Activated CD8-positive, alpha-beta T cell treated with anti-CD3 and anti-CD28 coated beads, Interleukin-2, amount 10 ng/mL, durations not matched to agents 7 days and 5 days (primary cell): ENCODE measurements at regions of chr5 and their contacts with region 1.

Region 1: DNA sequence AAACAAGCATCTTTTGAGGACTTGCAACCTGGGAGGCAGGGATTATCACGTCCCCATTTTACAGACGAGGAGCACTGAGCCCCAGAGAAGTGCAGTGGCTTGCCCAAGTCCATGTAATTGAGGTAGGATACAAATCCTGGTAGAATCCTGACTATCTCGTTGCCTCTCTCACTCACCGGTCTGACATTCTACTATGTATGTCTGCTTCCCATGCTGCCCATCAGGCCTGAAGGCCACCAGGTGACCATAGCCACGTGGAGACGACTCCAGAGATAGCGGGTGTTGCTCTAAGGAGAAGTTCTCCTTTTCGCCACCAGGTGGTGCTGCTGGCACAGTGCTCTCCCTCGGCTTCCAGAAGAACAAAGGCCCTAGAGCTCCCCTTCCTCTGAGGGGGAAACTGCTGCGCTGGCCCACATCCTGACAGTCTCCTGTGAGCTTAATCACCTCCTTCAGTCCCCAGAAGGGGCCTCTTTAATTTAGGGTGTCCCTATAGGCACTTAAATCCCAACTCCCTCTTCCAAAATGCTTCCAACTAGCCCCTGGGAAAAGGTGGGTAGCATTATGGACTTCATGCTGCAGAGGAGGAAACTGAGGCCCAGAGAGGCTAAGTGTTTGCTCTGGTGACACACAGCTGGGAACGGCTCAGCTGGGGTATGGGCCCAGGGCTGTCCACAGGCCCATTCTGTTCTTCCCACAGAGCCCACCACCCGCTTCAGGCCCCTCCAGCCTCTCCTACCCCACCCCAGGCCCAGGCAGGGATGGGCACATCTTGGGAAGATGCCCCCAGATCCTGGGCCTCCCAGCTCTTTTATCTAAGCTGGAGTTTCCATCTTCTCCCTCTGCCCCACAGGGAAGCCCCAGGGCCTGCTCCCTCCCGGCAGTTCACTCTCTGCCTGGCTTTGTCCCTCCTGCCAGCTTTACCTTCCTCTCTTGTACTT is 6.4 kb downstream of the SLC34A1 start:
- DNase-seq: peak; percentile 94
- ATAC-seq: peak; percentile 84
- H3K4me3 Mint-ChIP-seq: peak overlapping the region; percentile 19
- H3K27ac Mint-ChIP-seq: peak overlapping the region; percentile 93
- H3K4me1 Mint-ChIP-seq: peaks cover 59% of the 10 kb centered on the region
- H3K27me3 Mint-ChIP-seq: peaks cover 3% of the 10 kb centered on the region

Region 2: DNA sequence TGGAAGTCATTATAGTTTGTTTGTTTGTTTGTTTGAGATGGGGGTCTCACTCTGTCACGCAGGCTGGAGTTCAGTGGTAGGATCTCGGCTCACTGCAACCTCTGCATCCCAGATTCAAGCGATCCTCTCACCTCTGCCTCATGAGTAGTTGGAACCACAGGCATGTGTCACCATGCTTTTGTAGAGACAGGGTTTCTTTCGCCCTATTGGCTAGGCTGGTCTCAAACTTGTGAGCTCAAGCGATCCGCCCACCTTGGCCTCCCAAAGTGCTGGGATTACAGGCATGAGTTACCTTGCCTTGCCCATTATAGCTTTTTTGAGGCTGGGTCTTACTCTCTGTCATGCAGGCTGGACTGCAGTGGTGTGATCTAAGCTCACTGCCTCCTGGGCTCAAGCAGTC is 228.3 kb before region 1 on chr5:
- CTCF ChIA-PET with region 1: no interaction called
- POLR2A ChIA-PET with region 1: no interaction called
- DNase-seq: no peak
- ATAC-seq: no peak
- H3K4me3 Mint-ChIP-seq: no peak overlapping the region
- H3K27ac Mint-ChIP-seq: no peak overlapping the region
- H3K4me1 Mint-ChIP-seq: no peaks in the 10 kb centered on the region
- H3K27me3 Mint-ChIP-seq: no peaks in the 10 kb centered on the region

Region 3: DNA sequence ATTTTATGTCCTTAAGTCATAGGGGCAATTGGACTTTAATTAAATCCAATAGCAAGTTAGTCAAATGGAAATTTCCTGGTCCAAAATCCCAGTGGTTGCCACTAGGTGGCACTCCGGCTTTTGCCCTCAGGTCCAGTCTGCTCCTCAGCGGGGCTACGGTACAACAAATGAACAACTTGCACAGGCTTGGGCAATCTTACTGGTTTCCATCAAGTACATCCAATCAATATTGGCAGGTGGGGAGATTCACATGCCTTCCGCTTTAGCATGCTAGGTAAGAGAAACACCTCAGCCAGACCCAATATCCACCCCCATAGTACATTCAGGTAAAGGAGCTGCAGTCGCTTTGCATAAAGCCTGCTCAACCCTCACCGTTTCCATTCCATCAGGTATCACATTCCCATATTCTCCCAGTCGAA is 72.7 kb before region 1 on chr5:
- CTCF ChIA-PET with region 1: interaction called, 41 read pairs
- POLR2A ChIA-PET with region 1: interaction called, 3 read pairs
- DNase-seq: peak; percentile 84
- ATAC-seq: peak; percentile 67
- H3K4me3 Mint-ChIP-seq: no peak overlapping the region
- H3K27ac Mint-ChIP-seq: no peak overlapping the region
- H3K4me1 Mint-ChIP-seq: peaks cover 44% of the 10 kb centered on the region
- H3K27me3 Mint-ChIP-seq: no peaks in the 10 kb centered on the region

Region 4: DNA sequence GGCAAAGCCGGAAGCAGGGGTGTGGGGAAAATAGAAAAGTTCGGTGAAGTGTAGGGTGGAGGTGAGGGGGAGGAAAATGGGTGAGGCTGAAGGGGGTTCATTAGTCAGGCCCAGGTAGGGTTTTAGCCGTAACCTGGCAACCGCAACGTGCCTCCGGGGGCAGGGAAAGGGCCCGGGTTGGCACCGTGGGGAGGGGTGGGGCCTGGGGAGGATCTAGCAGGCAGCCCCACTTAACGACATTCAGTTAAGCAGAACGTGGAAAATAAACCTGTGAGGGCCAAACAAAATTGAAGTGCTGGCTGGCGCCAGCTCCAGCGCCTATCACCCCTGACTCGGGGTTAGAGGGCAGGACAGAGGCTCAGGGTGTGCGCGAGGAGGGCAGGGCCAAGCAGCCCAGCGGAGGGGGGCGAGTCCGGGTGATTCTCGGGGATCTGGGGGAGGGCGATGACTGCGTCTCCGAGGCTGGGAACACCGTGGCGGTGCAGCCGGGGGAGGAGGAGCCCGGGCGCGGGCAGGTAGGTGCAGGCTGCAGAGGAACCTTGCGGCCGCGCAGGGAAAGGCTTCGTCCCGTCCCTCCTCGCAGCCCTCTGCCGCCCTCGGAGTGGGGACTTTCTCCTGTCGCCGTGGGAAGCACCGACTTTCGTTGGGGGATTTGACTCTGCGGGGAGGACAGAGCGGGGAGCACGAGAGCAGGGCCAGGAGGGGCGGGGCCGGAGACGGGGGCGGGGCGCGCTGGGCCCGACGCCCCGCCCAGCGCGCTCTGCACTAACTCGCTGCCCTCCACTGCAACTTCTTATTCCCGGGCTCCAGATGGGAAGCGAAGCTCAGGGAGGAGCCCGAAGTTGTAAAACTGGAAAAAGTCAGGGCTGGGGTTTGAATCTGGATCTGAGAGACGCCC is 27.8 kb before region 1 on chr5:
- CTCF ChIA-PET with region 1: interaction called, 27 read pairs
- POLR2A ChIA-PET with region 1: interaction called, 3 read pairs
- DNase-seq: peak; percentile 66
- ATAC-seq: peak; percentile 62
- H3K4me3 Mint-ChIP-seq: peak overlapping the region; percentile 79
- H3K27ac Mint-ChIP-seq: peak overlapping the region; percentile 41
- H3K4me1 Mint-ChIP-seq: peaks cover 70% of the 10 kb centered on the region
- H3K27me3 Mint-ChIP-seq: no peaks in the 10 kb centered on the region

Region 5: DNA sequence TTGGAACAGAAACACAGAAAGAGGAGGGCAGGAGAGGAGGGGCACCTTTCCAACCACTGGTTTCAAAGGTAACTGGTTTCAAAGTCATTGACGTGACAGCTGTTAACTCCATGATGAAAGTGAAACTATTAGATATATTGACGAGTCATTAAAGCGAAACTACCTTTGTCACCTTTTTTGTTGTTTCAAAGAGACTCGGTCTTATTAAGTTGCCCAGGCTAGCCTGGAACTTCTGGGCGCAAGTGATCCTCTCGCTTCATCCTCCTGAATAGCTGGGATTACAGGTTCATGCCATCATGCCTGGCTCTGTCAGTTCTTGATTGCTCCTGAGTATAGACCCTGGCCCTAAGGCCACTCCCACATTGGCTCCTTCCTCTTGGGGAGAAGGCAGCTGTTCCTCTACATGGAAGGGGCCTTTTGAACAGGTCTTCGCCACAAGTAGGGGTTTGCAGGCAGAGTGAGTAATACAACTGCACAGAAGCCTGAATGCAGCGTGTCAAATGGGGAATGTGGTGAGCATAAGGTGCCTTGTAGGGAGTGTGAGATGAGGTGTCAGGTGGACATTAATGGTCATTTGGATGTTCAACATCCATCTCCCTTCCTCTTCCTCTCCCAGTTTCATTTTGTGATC is 22.1 kb after region 1 on chr5:
- CTCF ChIA-PET with region 1: interaction called, 270 read pairs
- POLR2A ChIA-PET with region 1: no interaction called
- DNase-seq: no peak
- ATAC-seq: peak; percentile 38
- H3K4me3 Mint-ChIP-seq: peak overlapping the region; percentile 10
- H3K27ac Mint-ChIP-seq: peak overlapping the region; percentile 65
- H3K4me1 Mint-ChIP-seq: peaks cover 46% of the 10 kb centered on the region
- H3K27me3 Mint-ChIP-seq: no peaks in the 10 kb centered on the region

Region 6: GRCh38 chr5:177446200-177447065 is 55.8 kb after region 1 on chr5 and contains the start of gene PRR7:
- CTCF ChIA-PET with region 1: interaction called, 175 read pairs
- POLR2A ChIA-PET with region 1: interaction called, 7 read pairs
- DNase-seq: peak; percentile 79
- ATAC-seq: peak; percentile 74
- H3K4me3 Mint-ChIP-seq: peak within 1 kb of the TSS; percentile 70
- H3K27ac Mint-ChIP-seq: peak within 1 kb of the TSS; percentile 65
- H3K4me1 Mint-ChIP-seq: peaks cover 43% of the 10 kb centered on the region
- H3K27me3 Mint-ChIP-seq: peaks cover 6% of the 10 kb centered on the region
- total RNA-seq, gene PRR7: 9.8 to 11.6 TPM

Region 7: GRCh38 chr5:177473461-177474001 is 82.9 kb after region 1 on chr5 and contains the start of gene DBN1:
- CTCF ChIA-PET with region 1: interaction called, 29 read pairs
- POLR2A ChIA-PET with region 1: interaction called, 3 read pairs
- DNase-seq: peak; percentile 51
- ATAC-seq: peak; percentile 27
- H3K4me3 Mint-ChIP-seq: peak within 1 kb of the TSS; percentile 80
- H3K27ac Mint-ChIP-seq: peak within 1 kb of the TSS; percentile 83
- H3K4me1 Mint-ChIP-seq: peaks cover 76% of the 10 kb centered on the region
- H3K27me3 Mint-ChIP-seq: peaks cover 4% of the 10 kb centered on the region
- total RNA-seq, gene DBN1: 92.9 to 104 TPM

Region 8: GRCh38 chr5:177509381-177509951 is 118.8 kb after region 1 on chr5 and contains the start of gene DOK3:
- CTCF ChIA-PET with region 1: interaction called, 11 read pairs
- POLR2A ChIA-PET with region 1: no interaction called
- DNase-seq: no peak
- ATAC-seq: no peak
- H3K4me3 Mint-ChIP-seq: no peak within 1 kb of the TSS
- H3K27ac Mint-ChIP-seq: peak within 1 kb of the TSS; percentile 63
- H3K4me1 Mint-ChIP-seq: peaks cover 12% of the 10 kb centered on the region
- H3K27me3 Mint-ChIP-seq: no peaks in the 10 kb centered on the region
- total RNA-seq, gene DOK3: 7.3 to 7.8 TPM